Spleen (tissue), 13 donors: ENCODE measurements at regions of chr1 and their contacts with region 1.

Region 1: GRCh38 chr1:210143465-210144062 is 89.0 kb upstream of the SERTAD4 start:
- DNase-seq: no peak
- H3K4me3 ChIP-seq: no peak overlapping the region
- H3K27ac ChIP-seq: no peak overlapping the region
- H3K4me1 ChIP-seq: no peaks in the 10 kb centered on the region
- H3K27me3 ChIP-seq: peaks cover 0 to 14% (median 0%) of the 10 kb centered on the region in 7 donors
- CTCF ChIP-seq: peak in 6 of 11 experiments; percentile 28 to 54 (median 45)
- POLR2A ChIP-seq: no peak

Region 2: DNA sequence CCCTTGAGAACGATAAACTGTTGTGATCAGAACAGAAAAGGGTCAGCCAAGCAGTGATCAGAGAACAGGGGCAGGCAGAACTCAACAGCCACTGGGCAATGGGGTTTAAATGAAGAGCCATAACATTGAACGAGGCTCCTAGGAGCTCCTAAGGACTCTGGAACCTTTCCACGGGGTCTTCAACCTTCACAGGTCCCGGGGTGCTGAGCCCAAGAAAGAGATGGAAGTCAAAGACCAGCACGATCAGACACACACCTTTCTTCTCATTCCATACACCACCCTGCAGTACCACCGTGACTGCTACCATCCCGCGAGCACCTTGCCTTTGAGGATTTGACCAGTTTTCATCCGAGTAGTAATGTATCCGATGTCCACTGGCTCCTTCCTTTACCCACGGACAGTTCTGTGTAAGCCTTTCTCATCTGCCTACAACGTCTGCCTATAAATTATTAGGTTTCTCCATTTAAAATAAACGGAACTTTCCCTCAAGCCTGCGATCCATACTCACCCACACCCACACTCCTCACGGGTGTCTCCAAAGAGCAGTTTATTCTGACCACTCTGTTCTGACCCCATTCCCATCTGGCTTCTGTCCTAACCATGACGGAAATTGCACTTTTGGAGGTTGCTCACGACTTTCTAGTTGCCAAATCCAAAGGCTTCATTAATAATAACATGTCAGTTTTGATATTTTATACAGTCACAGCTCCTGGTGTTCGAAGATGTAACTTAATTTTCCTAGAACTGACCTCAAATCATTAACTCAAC is 168.3 kb after region 1 on chr1:
- intact Hi-C with region 1: loop called (anchors 5 kb)
- DNase-seq: no peak
- H3K4me3 ChIP-seq: peak overlapping the region in 4 of 8 donors; percentile 28 to 70 (median 36)
- H3K27ac ChIP-seq: peak overlapping the region in 6 of 8 donors; percentile 6 to 57 (median 40)
- H3K4me1 ChIP-seq: peaks cover 0 to 18% (median 13%) of the 10 kb centered on the region in 6 donors
- H3K27me3 ChIP-seq: peaks cover 0 to 6% (median 0%) of the 10 kb centered on the region in 7 donors
- CTCF ChIP-seq: no peak
- POLR2A ChIP-seq: no peak

Region 3: DNA sequence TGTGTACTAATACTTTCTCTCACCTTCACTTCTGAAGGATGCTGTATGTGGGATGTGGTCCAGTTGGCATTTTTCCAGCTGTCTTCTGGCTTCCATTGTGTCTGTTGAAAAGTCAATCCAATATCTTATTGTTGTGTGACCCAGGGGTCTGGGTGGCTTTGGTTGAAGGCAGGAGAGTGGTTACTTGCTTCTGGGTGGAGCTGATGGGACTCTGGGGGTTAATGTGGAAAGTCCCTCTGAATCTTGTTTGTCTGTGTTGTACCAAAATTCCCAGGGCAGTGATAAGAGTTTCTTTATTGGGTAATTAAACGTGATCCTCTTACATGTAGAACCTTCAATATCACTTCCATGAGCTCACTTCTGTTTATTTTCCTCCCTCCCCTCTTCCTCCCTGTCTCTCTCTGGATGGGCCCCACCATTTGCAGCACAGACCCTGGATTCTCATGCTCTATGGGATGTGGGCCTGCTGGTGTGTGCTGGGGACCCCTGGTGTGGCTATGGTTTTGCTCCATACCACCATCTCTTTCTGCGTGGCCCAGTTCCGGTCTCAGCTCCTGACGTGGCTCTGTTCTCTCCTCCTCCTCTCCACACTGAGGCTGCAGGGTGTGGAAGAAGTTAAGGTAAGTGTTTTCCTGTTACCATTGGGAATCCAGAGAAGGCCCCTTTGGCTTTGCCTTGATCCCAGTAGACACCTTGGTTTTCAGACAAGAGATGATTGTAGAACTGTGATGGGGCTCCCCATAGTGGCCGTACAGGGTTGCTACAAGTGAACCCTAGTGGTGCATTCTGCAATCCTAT is 256.7 kb after region 1 on chr1:
- intact Hi-C with region 1: loop called (anchors 5 kb)
- DNase-seq: no peak
- H3K4me3 ChIP-seq: no peak overlapping the region
- H3K27ac ChIP-seq: no peak overlapping the region
- H3K4me1 ChIP-seq: no peaks in the 10 kb centered on the region
- H3K27me3 ChIP-seq: no peaks in the 10 kb centered on the region
- CTCF ChIP-seq: peak; percentile 22 to 81 (median 65)
- POLR2A ChIP-seq: no peak